ENCODE measurements at regions of chr10 and their contacts with region 1.

Region 1: GRCh38 chr10:18293536-18294510 is 153.6 kb downstream of the CACNB2 start:
- DNase-seq: no peak
- H3K4me3 ChIP-seq: no peak overlapping the region
- H3K27ac ChIP-seq: no peak overlapping the region
- H3K4me1 ChIP-seq: no peaks in the 10 kb centered on the region
- H3K27me3 ChIP-seq: peaks cover 0 to 1% (median 0%) of the 10 kb centered on the region in 5 experiments

Region 2: GRCh38 chr10:17730667-17731066 is 563.2 kb before region 1 on chr10:
- CTCF ChIA-PET with region 1: no interaction called
- POLR2A ChIA-PET with region 1: interaction called, 10 read pairs
- DNase-seq: no peak
- H3K4me3 ChIP-seq: no peak overlapping the region
- H3K27ac ChIP-seq: no peak overlapping the region
- H3K4me1 ChIP-seq: peaks cover 0 to 12% (median 7%) of the 10 kb centered on the region in 4 experiments
- H3K27me3 ChIP-seq: no peaks in the 10 kb centered on the region